ENCODE measurements at regions of chr2 and their contacts with region 1.

Region 1: GRCh38 chr2:232327105-232328041 is 51.2 kb upstream of the ALPP start:
- DNase-seq: peak; percentile 56 to 86 (median 71)
- H3K4me3 ChIP-seq: no peak overlapping the region
- H3K27ac ChIP-seq: no peak overlapping the region
- H3K4me1 ChIP-seq: no peaks in the 10 kb centered on the region
- H3K27me3 ChIP-seq: no peaks in the 10 kb centered on the region
- CTCF ChIP-seq: peak; percentile 74 to 96 (median 92)
- POLR2A ChIP-seq: no peak

Region 2: GRCh38 chr2:231900486-231900942 is 426.9 kb before region 1 on chr2:
- intact Hi-C with region 1: loop called in 1 of 2 experiments (anchors 5 kb)
- DNase-seq: peak; percentile 74 to 89 (median 83)
- H3K4me3 ChIP-seq: no peak overlapping the region
- H3K27ac ChIP-seq: no peak overlapping the region
- H3K4me1 ChIP-seq: no peaks in the 10 kb centered on the region
- H3K27me3 ChIP-seq: no peaks in the 10 kb centered on the region
- CTCF ChIP-seq: peak; percentile 68 to 83 (median 76)
- POLR2A ChIP-seq: no peak

Region 3: DNA sequence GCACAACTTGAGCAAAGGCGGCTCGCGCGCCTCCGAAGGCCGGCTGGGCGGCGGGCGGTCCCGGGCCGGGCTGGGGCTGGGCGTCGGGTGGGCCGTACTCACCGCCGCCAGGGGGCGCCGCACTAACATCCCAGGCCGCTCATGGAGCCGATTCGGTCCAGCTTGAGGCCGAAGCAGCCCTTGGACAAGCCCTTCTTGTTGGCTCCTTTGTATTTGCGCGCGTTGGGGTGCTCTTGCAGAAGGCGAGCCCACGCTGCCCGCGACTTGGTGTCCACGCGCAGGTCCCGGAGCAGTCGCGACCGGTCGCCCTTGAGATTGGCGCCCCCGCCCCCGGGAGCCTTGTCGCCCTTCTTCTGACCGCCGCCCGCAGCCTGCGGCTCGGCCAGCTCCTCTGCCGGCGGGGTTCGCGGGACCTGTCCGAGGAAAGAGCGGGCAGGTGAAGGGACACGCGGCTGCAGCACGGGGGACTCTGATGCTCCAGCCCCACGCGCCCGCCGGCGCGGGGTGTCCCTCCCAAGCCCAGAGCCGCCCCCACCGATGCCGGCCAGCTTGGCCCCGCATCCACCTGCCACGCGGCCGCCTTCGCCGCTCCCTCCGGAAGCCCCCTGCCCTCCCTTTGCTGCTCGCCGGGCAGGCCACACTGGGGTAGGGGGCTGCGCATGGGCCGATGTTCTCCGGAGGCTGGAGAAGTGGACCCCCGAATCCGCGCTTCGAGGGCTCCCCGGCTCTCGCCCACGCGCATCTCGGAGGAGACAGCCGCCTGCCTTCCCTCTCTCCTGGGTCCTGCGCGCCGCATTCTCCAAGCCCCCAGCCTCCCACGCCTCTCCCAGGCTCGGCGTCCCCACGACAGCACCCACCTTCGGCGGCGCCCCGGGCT is 401.8 kb before region 1 on chr2:
- intact Hi-C with region 1: loop called (anchors 5 kb)
- DNase-seq: peak; percentile 80 to 92 (median 87)
- H3K4me3 ChIP-seq: peak overlapping the region in 2 of 4 donors; percentile 10 to 35
- H3K27ac ChIP-seq: no peak overlapping the region
- H3K4me1 ChIP-seq: peaks cover 13 to 21% of the 10 kb centered on the region in 2 donors
- H3K27me3 ChIP-seq: peaks cover 44% of the 10 kb centered on the region
- CTCF ChIP-seq: peak; percentile 47 to 96 (median 82)
- POLR2A ChIP-seq: no peak

Region 4: GRCh38 chr2:232142049-232142448 is 185.3 kb before region 1 on chr2:
- intact Hi-C with region 1: loop called in 1 of 2 experiments (anchors 10 kb)
- DNase-seq: peak; percentile 18 to 62 (median 46)
- H3K4me3 ChIP-seq: no peak overlapping the region
- H3K27ac ChIP-seq: no peak overlapping the region
- H3K4me1 ChIP-seq: no peaks in the 10 kb centered on the region
- H3K27me3 ChIP-seq: no peaks in the 10 kb centered on the region
- CTCF ChIP-seq: peak; percentile 49 to 83 (median 72)
- POLR2A ChIP-seq: no peak

Region 5: GRCh38 chr2:232511336-232511888 is 184.0 kb after region 1 on chr2:
- intact Hi-C with region 1: loop called in 1 of 2 experiments (anchors 10 kb)
- DNase-seq: peak; percentile 58 to 89 (median 78)
- H3K4me3 ChIP-seq: no peak overlapping the region
- H3K27ac ChIP-seq: peak overlapping the region in 1 of 5 donors; percentile 29
- H3K4me1 ChIP-seq: peaks cover 0 to 14% of the 10 kb centered on the region in 2 donors
- H3K27me3 ChIP-seq: no peaks in the 10 kb centered on the region
- CTCF ChIP-seq: no peak
- POLR2A ChIP-seq: no peak

Measured in adrenal gland (tissue), 19 donors.